Testis (tissue), 5 donors: ENCODE measurements at regions of chr15 and their contacts with region 1.

Region 1: GRCh38 chr15:100873029-100873677 is 6.5 kb upstream of the ALDH1A3 start:
- DNase-seq: peak; percentile 87
- H3K4me3 ChIP-seq: no peak overlapping the region
- H3K27ac ChIP-seq: no peak overlapping the region
- H3K4me1 ChIP-seq: no peaks in the 10 kb centered on the region
- H3K27me3 ChIP-seq: no peaks in the 10 kb centered on the region
- CTCF ChIP-seq: peak; percentile 90 to 96 (median 94)
- POLR2A ChIP-seq: no peak

Region 2: DNA sequence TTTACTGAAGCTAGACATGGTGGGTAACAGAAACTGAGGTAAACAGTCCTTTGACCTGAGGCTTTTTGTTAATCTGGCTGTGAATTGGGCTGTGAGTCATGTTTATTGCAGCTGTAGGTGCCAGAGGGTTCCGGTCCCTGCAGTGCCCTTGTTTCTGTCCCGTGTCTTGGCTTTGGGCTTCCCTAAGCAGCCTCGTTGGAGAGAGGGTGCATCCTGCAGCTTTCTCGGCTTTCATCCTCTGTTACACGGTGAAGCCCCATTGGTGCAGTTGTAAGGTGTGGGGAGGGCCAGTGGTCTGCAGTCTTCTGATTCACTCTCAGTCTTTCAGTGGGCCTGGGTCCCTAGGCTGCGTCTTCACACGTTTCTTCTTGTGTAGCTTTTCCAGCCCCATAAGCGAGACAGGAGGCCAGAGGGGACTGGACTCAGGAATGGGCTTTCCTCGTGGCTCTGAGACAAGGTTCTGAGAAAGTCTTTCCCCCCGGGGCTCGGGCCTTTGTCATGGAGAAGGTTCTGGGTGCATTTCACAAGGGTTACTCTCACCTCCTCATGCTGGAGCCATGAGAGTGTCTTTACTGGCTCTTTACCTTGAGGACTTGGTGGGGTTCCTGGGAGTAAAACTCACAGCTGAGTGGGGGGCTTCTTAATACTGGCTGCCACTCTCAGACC is 237.6 kb before region 1 on chr15:
- intact Hi-C with region 1: loop called (anchors 10 kb)
- DNase-seq: no peak
- H3K4me3 ChIP-seq: no peak overlapping the region
- H3K27ac ChIP-seq: no peak overlapping the region
- H3K4me1 ChIP-seq: no peaks in the 10 kb centered on the region
- H3K27me3 ChIP-seq: no peaks in the 10 kb centered on the region
- CTCF ChIP-seq: no peak
- POLR2A ChIP-seq: no peak

Region 3: GRCh38 chr15:100671858-100672543 is 201.2 kb before region 1 on chr15:
- intact Hi-C with region 1: no loop called
- DNase-seq: no peak
- H3K4me3 ChIP-seq: no peak overlapping the region
- H3K27ac ChIP-seq: no peak overlapping the region
- H3K4me1 ChIP-seq: no peaks in the 10 kb centered on the region
- H3K27me3 ChIP-seq: no peaks in the 10 kb centered on the region
- CTCF ChIP-seq: peak; percentile 26 to 50 (median 46)
- POLR2A ChIP-seq: no peak